ENCODE measurements at regions of chr3 and their contacts with region 1.

Region 1: DNA sequence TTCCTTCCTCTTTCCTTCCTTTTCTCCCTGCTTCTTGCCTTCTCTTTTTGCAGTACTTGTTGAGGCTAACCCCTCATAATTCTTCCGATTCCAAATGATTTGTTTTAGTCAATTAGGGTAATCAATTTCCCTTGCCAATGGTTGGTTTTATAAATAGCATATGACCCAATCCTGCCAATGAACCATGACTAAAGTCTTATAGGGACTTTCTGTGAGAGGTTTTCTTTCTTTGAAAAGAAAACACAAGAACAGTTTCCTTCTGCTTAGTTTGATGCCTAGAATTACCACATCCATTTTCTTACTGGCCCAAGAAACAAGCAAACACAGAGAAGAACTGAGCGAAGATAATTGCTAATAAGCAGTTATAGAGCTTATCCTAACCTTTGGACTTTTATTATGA is 292.5 kb upstream of the SATB1 start:
- DNase-seq: no peak
- H3K4me3 Mint-ChIP-seq: no peak overlapping the region
- H3K27ac Mint-ChIP-seq: peak overlapping the region; percentile 84
- H3K4me1 Mint-ChIP-seq: peaks cover 71% of the 10 kb centered on the region
- H3K27me3 Mint-ChIP-seq: no peaks in the 10 kb centered on the region

Region 2: DNA sequence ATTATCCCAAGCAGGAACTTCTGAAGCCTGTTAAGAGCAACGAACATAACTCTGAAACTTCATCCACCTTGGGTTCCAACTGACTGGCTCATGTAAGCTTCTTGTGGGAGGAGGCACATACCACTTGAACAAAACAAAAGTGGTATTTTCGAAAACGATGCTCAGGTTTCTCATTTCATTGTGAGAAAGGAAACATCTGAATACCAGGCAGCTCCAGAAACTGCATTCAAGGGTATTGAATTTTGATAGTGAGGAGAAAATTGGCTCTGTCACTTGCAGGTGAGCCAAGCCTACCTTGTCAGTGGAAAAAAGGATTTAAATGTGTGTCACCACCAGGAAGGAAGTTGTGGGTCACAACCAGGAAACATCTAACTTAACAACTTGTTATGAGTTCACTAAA is 74.3 kb before region 1 on chr3:
- CTCF ChIA-PET with region 1: interaction called, 4 read pairs
- intact Hi-C with region 1: loop called (anchors 1 kb)
- DNase-seq: peak; percentile 36
- H3K4me3 Mint-ChIP-seq: no peak overlapping the region
- H3K27ac Mint-ChIP-seq: peak overlapping the region; percentile 69
- H3K4me1 Mint-ChIP-seq: peaks cover 60% of the 10 kb centered on the region
- H3K27me3 Mint-ChIP-seq: no peaks in the 10 kb centered on the region

Region 3: GRCh38 chr3:18669374-18669773 is 48.2 kb before region 1 on chr3:
- CTCF ChIA-PET with region 1: interaction called, 3 read pairs
- intact Hi-C with region 1: loop called (anchors 1 kb)
- DNase-seq: peak; percentile 68
- H3K4me3 Mint-ChIP-seq: no peak overlapping the region
- H3K27ac Mint-ChIP-seq: peak overlapping the region; percentile 76
- H3K4me1 Mint-ChIP-seq: peaks cover 49% of the 10 kb centered on the region
- H3K27me3 Mint-ChIP-seq: no peaks in the 10 kb centered on the region

Region 4: DNA sequence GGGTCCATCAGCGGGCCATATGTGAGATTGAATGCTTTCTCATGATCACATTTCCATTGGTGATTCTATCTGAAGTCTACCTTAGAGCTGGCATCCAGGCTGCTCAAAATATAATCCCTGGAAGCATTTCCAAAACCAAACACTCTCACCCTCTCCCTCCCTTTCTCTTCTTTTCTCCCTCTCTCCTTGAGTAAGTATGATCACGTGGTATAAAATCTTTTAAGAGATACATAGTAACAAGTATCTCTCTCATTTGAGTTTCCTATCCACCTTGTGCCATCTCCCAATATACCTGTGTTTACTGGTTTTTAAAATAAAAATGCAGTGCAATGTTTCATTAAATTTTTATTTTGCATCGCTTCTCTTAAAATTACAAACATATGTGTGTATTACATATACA is 79.8 kb after region 1 on chr3:
- CTCF ChIA-PET with region 1: no interaction called
- intact Hi-C with region 1: no loop called
- DNase-seq: no peak
- H3K4me3 Mint-ChIP-seq: no peak overlapping the region
- H3K27ac Mint-ChIP-seq: no peak overlapping the region
- H3K4me1 Mint-ChIP-seq: peaks cover 3% of the 10 kb centered on the region
- H3K27me3 Mint-ChIP-seq: no peaks in the 10 kb centered on the region

Measured in activated naive CD4-positive, alpha-beta T cell treated with anti-CD3 and anti-CD28 coated beads for 36 hours (primary cell).